WTC11 (cell line): ENCODE measurements at regions of chr10 and their contacts with region 1.

Region 1: GRCh38 chr10:44506386-44506785 is 121.5 kb upstream of the CXCL12 start:
- DNase-seq: no peak
- ATAC-seq: peak; percentile 56
- H3K4me3 Mint-ChIP-seq: no peak overlapping the region
- H3K27ac Mint-ChIP-seq: no peak overlapping the region
- H3K4me1 Mint-ChIP-seq: no peaks in the 10 kb centered on the region
- H3K27me3 Mint-ChIP-seq: no peaks in the 10 kb centered on the region; the same call in 1 of the 2 replicates
- CTCF ChIP-seq: no peak

Region 2: DNA sequence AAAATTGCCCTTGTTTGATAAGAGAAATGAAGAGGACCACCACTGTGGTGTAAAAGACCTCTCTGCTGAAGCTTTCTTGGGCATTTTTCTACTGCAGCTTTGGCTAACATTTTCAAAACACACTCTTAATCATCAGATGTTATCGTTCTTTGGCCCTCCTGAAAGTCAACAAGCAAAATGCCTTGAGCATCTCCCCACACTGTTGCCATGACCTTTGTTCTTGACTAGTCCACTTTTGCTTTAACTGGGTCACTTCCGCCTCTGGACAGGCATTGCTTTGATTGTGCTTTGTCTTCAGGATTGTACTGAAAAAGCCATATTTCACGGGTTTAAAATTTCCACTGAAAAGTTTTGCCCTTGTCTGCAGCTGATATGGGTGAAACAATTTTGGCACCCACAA is 13.7 kb before region 1 on chr10:
- CTCF ChIA-PET with region 1: no interaction called
- POLR2A ChIA-PET with region 1: no interaction called
- DNase-seq: no peak
- ATAC-seq: no peak
- H3K4me3 Mint-ChIP-seq: no peak overlapping the region
- H3K27ac Mint-ChIP-seq: no peak overlapping the region
- H3K4me1 Mint-ChIP-seq: no peaks in the 10 kb centered on the region
- H3K27me3 Mint-ChIP-seq: peaks cover 3% of the 10 kb centered on the region
- CTCF ChIP-seq: no peak

Region 3: GRCh38 chr10:44517635-44518034 is 11.2 kb after region 1 on chr10:
- CTCF ChIA-PET with region 1: interaction called, 37 read pairs
- POLR2A ChIA-PET with region 1: interaction called, 3 read pairs
- DNase-seq: peak; percentile 68
- ATAC-seq: peak; percentile 99
- H3K4me3 Mint-ChIP-seq: no peak overlapping the region
- H3K27ac Mint-ChIP-seq: no peak overlapping the region
- H3K4me1 Mint-ChIP-seq: no peaks in the 10 kb centered on the region
- H3K27me3 Mint-ChIP-seq: no peaks in the 10 kb centered on the region
- CTCF ChIP-seq: peak; percentile 60